ENCODE measurements at regions of chr11 and their contacts with region 1.

Region 1: DNA sequence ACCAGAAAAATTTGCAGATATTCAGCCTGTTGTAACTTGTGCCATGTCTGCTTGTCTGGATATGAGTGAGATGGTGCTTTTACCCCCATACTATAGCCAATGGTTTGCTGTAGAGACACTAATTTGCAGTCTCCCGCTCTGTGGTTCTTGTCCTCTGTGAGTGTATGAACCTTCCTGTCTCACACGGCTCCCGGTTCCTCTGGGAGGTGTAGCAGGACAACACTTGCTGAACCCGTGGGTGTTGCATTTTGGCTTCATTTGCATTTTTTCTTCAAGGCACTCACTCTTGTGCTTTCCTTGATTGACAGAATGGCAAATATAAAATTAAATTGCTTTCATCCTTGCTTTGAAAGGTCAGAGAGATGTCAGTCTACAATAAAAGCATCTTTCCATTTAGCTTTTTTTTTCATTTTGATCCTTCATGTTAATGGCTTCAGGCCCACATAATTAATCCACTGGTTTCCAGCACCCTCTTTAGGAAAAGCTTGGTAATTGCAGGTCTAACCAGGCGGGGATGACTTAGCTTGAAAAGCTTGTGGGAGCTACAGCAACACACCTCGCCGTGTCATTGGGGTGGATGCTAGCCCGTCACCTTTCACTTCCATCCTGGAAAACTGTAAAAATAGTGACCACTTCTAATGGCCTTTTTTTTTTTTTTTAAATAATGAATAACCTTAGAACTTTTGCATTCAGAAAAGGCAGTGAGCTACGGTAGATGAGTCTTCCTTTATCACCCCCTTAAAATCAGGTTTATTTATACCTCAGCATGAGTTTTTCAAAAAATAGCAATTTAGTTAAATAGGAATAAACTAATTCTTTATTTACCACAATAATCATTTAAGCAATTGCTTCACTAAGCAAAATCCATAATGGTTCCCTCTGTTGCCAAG is 27.4 kb upstream of the ST14 start:
- DNase-seq: peak; percentile 83
- H3K4me3 ChIP-seq: no peak overlapping the region
- H3K27ac ChIP-seq: no peak overlapping the region
- H3K4me1 ChIP-seq: peaks cover 0 to 6% of the 10 kb centered on the region in 2 experiments; a peak in 1 of 4 replicates
- H3K27me3 ChIP-seq: no peaks in the 10 kb centered on the region
- CTCF ChIP-seq: peak; percentile 87
- EP300 ChIP-seq: no peak
- RAD21 ChIP-seq: peak; percentile 95

Region 2: DNA sequence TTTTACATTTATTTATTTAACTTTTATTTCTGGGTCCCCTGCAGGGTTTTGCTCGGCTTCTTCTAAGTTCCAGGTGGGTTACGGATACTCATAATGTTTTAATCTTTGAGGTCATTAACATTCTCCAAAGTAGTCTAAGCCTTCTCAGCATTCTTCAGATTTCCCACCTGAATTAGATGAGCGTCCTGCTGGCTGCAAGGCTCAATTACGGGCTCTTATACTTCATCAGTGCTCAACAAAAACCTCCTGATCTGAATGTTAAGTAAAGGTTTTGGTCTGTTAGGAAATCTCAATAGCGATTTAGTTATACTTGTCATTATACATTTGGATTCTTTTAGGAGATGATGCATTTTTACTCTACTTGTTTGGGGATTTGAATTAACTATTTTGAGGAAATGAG is 209.5 kb before region 1 on chr11:
- CTCF ChIA-PET with region 1: interaction called, 150 read pairs
- POLR2A ChIA-PET with region 1: interaction called, 3 read pairs
- DNase-seq: no peak
- H3K4me3 ChIP-seq: no peak overlapping the region
- H3K27ac ChIP-seq: no peak overlapping the region
- H3K4me1 ChIP-seq: no peaks in the 10 kb centered on the region
- H3K27me3 ChIP-seq: no peaks in the 10 kb centered on the region
- CTCF ChIP-seq: no peak
- EP300 ChIP-seq: no peak
- RAD21 ChIP-seq: no peak

Region 3: GRCh38 chr11:129992161-129992944 is 139.9 kb before region 1 on chr11:
- CTCF ChIA-PET with region 1: interaction called, 30 read pairs
- POLR2A ChIA-PET with region 1: interaction called, 3 read pairs
- DNase-seq: peak; percentile 67
- H3K4me3 ChIP-seq: no peak overlapping the region
- H3K27ac ChIP-seq: peak overlapping the region in 1 of 2 experiments; percentile 74; a peak in 2 of 4 replicates
- H3K4me1 ChIP-seq: peaks cover 12% of the 10 kb centered on the region in 2 experiments; a peak in 3 of 4 replicates
- H3K27me3 ChIP-seq: no peaks in the 10 kb centered on the region
- CTCF ChIP-seq: peak; percentile 26; the same call in 1 of the 2 replicates
- EP300 ChIP-seq: no peak
- RAD21 ChIP-seq: peak; percentile 57

Region 4: DNA sequence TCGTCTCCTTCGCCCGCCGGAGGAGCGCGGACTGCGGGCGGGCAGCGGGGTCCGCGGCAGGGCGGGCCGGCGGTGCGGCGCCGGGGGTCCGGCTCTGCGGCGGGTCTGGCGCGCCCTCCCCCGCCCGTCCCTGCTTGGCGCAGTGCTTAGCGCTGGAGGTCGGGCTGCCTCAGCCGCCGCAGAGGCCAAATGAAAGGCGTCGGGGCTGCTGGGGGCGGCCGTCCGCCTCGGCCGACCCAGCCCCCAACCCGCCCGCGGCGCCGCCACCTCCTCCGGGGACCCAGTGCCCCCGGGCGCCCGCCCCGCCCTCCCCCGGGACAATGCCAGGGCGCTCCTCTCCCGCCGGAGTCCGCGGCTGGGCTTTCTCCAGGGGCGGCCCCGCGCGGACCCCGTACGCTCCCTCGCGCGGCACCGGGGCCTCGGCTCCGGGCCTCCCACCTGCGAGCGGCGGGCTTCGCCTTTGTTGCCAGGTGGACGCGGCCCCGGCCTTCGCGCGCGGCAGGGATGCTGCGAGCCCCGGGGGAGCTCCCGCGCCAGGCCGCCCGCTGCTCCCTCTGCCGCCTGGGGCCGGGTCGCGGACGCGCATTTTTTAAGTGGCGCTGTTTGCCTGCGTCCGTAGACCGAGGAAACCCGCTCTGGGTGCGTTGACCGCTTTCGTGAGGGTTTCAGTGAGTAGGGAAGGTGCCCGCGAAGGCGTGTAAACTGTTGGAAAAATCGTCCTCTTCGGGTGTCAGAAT is 61.9 kb before region 1 on chr11:
- CTCF ChIA-PET with region 1: interaction called, 21 read pairs
- POLR2A ChIA-PET with region 1: interaction called, 4 read pairs
- DNase-seq: peak; percentile 80
- H3K4me3 ChIP-seq: peak overlapping the region; percentile 70 to 74
- H3K27ac ChIP-seq: peak overlapping the region; percentile 82 to 85
- H3K4me1 ChIP-seq: peaks cover 13 to 15% of the 10 kb centered on the region in 2 experiments; a peak in 3 of 4 replicates
- H3K27me3 ChIP-seq: no peaks in the 10 kb centered on the region
- CTCF ChIP-seq: peak; percentile 32
- EP300 ChIP-seq: no peak
- RAD21 ChIP-seq: no peak

Region 5: GRCh38 chr11:130480711-130481140 is 348.5 kb after region 1 on chr11:
- CTCF ChIA-PET with region 1: no interaction called
- POLR2A ChIA-PET with region 1: no interaction called
- DNase-seq: no peak
- H3K4me3 ChIP-seq: no peak overlapping the region
- H3K27ac ChIP-seq: peak overlapping the region in 1 of 2 experiments; percentile 41; a peak in 2 of 4 replicates
- H3K4me1 ChIP-seq: peaks cover 8 to 37% of the 10 kb centered on the region in 2 experiments; a peak in 3 of 4 replicates
- H3K27me3 ChIP-seq: no peaks in the 10 kb centered on the region
- CTCF ChIP-seq: no peak
- EP300 ChIP-seq: no peak
- RAD21 ChIP-seq: no peak

Measured in SK-N-SH (cell line).